BJ (cell line): ENCODE measurements at regions of chr14 and their contacts with region 1.

Region 1: GRCh38 chr14:102304611-102305509 is at the start of gene MOK:
- DNase-seq: peak; percentile 94
- H3K4me3 ChIP-seq: peak within 1 kb of the TSS; percentile 62
- H3K27me3 ChIP-seq: no peaks in the 10 kb centered on the region
- CTCF ChIP-seq: no peak
- polyA plus RNA-seq, gene MOK: 20.5 and 26.0 TPM in 2 replicates

Region 2: GRCh38 chr14:102125546-102125945 is 179.3 kb before region 1 on chr14:
- CTCF ChIA-PET with region 1: no interaction called
- POLR2A ChIA-PET with region 1: no interaction called
- DNase-seq: no peak
- H3K4me3 ChIP-seq: no peak overlapping the region
- H3K27me3 ChIP-seq: no peaks in the 10 kb centered on the region
- CTCF ChIP-seq: no peak

Region 3: GRCh38 chr14:102235275-102235897 is 69.5 kb before region 1 on chr14:
- CTCF ChIA-PET with region 1: interaction called, 17 read pairs
- POLR2A ChIA-PET with region 1: no interaction called
- DNase-seq: peak; percentile 28
- H3K4me3 ChIP-seq: no peak overlapping the region
- H3K27me3 ChIP-seq: no peaks in the 10 kb centered on the region
- CTCF ChIP-seq: peak; percentile 91